Dendritic cell treated with granulocyte-macrophage colony-stimulating factor and Interleukin-4, amounts not matched to agents 40 ng/mL and 50 ng/mL, for 4 days (primary cell): ENCODE measurements at regions of chr17 and their contacts with region 1.

Region 1: GRCh38 chr17:27265333-27265732 is 28.6 kb upstream of the WSB1 start:
- H3K4me3 Mint-ChIP-seq: no peak overlapping the region
- H3K27ac Mint-ChIP-seq: no peak overlapping the region
- H3K4me1 Mint-ChIP-seq: peaks cover 34% of the 10 kb centered on the region
- H3K27me3 Mint-ChIP-seq: peaks cover 2% of the 10 kb centered on the region

Region 2: GRCh38 chr17:27245230-27245696 is 20.1 kb before region 1 on chr17:
- intact Hi-C with region 1: loop called (anchors 2 kb)
- H3K4me3 Mint-ChIP-seq: peak overlapping the region; percentile 70
- H3K27ac Mint-ChIP-seq: peak overlapping the region; percentile 96
- H3K4me1 Mint-ChIP-seq: peaks cover 65% of the 10 kb centered on the region
- H3K27me3 Mint-ChIP-seq: no peaks in the 10 kb centered on the region

Region 3: DNA sequence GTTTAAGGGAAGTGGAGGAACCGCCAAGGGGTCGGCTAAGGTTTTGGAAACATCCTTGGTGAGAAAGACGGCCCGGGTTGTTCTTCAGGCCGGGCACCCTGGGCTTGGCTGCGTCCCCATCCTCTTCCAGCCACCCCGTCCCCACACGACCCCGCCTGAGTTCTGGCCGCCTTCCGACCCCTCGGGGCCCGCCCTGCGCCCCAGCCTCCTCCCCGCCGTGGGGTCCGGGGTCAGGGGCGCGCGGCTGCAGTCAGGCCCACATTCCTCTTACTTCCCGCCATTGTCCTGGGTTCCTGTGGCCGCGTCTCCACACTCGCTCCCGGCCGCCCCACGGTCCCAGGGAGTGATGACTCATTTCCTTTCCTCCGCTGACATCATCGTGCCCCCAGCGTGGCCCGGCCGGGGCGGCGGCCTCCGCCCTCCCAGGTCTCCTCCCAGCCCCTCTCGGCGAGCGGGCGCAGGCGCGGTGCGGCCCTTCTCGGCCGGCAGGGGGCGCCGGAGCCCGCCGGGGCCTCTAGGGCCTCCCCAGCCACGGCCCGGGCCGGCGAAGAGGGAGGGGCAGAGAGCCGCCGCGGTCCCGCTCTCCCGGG is 88.2 kb after region 1 on chr17:
- intact Hi-C with region 1: no loop called
- H3K4me3 Mint-ChIP-seq: peak overlapping the region; percentile 94
- H3K27ac Mint-ChIP-seq: peak overlapping the region; percentile 94
- H3K4me1 Mint-ChIP-seq: peaks cover 40% of the 10 kb centered on the region
- H3K27me3 Mint-ChIP-seq: no peaks in the 10 kb centered on the region